Motor neuron (in vitro differentiated cells): ENCODE measurements at regions of chr1 and their contacts with region 1.

Region 1: GRCh38 chr1:92310185-92310597 is 11.3 kb downstream of the RPAP2 start:
- ATAC-seq: peak in 3 of 8 experiments; percentile 33 to 62 (median 40)
- H3K4me3 ChIP-seq: no peak overlapping the region
- H3K27ac ChIP-seq: no peak overlapping the region
- H3K4me1 ChIP-seq: no peaks in the 10 kb centered on the region

Region 2: GRCh38 chr1:91572044-91572443 is 738.1 kb before region 1 on chr1:
- in situ Hi-C with region 1: no loop called
- ATAC-seq: no peak
- H3K4me3 ChIP-seq: no peak overlapping the region
- H3K27ac ChIP-seq: no peak overlapping the region
- H3K4me1 ChIP-seq: no peaks in the 10 kb centered on the region

Region 3: GRCh38 chr1:92211166-92211565 is 99.0 kb before region 1 on chr1:
- in situ Hi-C with region 1: no loop called
- ATAC-seq: no peak
- H3K4me3 ChIP-seq: no peak overlapping the region
- H3K27ac ChIP-seq: no peak overlapping the region
- H3K4me1 ChIP-seq: no peaks in the 10 kb centered on the region

Region 4: DNA sequence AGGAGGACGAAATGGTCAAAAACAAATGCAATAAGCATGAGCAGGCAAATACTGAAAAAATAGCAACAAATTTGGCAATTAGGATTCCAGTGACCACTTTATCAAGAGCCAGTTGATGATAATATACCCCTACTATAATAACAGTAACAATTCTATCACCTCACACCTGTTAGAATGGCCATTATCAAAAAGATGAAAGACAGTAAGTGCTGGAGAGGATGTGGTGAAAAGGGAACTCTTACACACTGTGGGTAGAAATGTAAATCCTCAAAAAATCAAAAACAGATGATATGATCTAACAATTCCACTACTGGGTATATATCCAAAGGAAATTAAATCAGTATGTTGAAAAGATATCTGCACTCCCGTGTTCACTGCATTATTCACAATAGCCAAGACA is 290.9 kb after region 1 on chr1:
- in situ Hi-C with region 1: loop called in 4 of 9 experiments (anchors 5 to 25 kb)
- ATAC-seq: no peak
- H3K4me3 ChIP-seq: no peak overlapping the region
- H3K27ac ChIP-seq: no peak overlapping the region
- H3K4me1 ChIP-seq: no peaks in the 10 kb centered on the region

Region 5: DNA sequence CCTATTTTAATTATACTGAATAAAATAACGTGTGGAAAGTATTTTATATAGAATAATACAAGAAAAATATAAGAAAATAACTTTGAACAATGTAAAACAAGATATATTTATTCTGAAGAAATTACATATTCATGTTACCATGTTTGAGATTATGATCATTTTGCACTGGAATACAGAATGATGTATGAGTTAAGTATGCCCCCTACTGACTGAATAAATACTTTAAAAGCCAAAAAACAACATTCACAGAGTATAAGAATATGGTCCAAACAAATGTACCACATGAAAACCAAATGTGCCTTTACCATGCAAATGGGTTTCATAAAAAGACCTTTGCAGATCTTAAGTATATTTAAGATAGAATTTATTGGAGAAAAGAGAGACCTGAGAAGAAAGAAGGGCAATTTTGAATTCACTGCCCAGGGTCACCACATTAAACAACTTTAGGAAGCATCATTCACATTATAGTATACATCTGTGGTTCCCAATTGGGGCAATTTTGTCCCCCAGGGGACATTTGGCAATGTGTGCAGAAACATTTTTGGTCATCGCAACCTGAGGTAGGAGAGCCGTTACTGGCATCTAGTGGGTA is 313.1 kb after region 1 on chr1:
- in situ Hi-C with region 1: loop called in 3 of 9 experiments (anchors 25 kb)
- ATAC-seq: peak in 3 of 8 experiments; percentile 42 to 63 (median 45)
- H3K4me3 ChIP-seq: no peak overlapping the region
- H3K27ac ChIP-seq: no peak overlapping the region
- H3K4me1 ChIP-seq: no peaks in the 10 kb centered on the region